Naive thymus-derived CD4-positive, alpha-beta T cell (primary cell): ENCODE measurements at regions of chr11 and their contacts with region 1.

Region 1: DNA sequence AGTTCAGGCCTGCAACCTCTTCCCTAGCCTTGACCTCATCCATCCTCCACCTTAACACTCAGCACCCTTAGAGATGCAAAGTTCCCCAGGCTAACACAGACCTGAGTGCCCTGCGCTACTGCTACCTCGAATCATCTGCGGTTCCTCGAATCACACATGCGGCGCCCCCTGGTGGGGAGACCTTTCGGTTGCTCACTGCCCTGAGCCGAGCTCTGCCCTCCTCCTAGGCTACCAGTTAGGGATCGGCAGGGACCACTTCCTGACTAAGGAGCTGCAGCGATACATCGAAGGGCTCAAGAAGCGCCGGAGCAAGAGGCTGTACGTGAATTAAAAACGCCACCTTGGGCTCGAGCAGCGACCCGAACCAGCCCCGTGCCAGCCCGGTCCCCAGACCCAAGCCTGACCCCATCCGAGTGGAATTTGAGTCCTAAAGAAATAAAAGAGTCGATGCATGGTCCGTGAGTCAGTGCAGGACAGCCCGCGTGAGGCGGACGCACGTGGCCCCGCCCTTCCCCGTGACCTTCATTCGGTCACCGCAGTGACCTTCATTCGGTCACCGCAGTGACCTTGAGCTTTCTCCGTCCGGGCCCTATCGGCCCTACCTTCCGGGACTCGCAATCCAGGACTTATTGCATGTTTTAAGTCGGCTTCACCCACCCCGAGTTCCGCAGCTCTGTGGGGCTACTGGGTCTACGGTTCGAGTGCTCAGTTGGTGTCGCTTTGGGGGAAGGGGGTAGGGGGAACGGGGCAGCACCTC is 830 bp upstream of the ESRRA start:
- DNase-seq: peak; percentile 79 to 95 (median 90)
- ATAC-seq: peak; percentile 40
- H3K4me3 ChIP-seq: peak overlapping the region; percentile 97
- H3K4me3 Mint-ChIP-seq: peak overlapping the region; percentile 89 to 98 (median 94)
- H3K27ac ChIP-seq: peak overlapping the region; percentile 91
- H3K27ac Mint-ChIP-seq: peak overlapping the region; percentile 81 to 98 (median 95)
- H3K4me1 ChIP-seq: peaks cover 28 to 32% of the 10 kb centered on the region in 2 donors
- H3K4me1 Mint-ChIP-seq: peaks cover 25 to 43% (median 34%) of the 10 kb centered on the region in 7 donors
- H3K27me3 ChIP-seq: peaks cover 0 to 13% of the 10 kb centered on the region in 2 donors
- H3K27me3 Mint-ChIP-seq: peaks cover 13 to 29% (median 16%) of the 10 kb centered on the region in 5 donors

Region 2: GRCh38 chr11:64000026-64000739 is 304.3 kb before region 1 on chr11:
- CTCF ChIA-PET with region 1: interaction called, 6 read pairs
- POLR2A ChIA-PET with region 1: no interaction called
- intact Hi-C with region 1: loop called (anchors 1 to 5 kb)
- DNase-seq: peak; percentile 59 to 82 (median 75)
- ATAC-seq: peak; percentile 88
- H3K4me3 ChIP-seq: peak overlapping the region; percentile 41
- H3K4me3 Mint-ChIP-seq: peak overlapping the region in 7 of 10 donors; percentile 14 to 76 (median 45)
- H3K27ac ChIP-seq: peak overlapping the region; percentile 16
- H3K27ac Mint-ChIP-seq: no peak overlapping the region
- H3K4me1 ChIP-seq: peaks cover 8 to 15% of the 10 kb centered on the region in 2 donors
- H3K4me1 Mint-ChIP-seq: peaks cover 0 to 16% (median 9%) of the 10 kb centered on the region in 7 donors
- H3K27me3 ChIP-seq: no peaks in the 10 kb centered on the region
- H3K27me3 Mint-ChIP-seq: peaks cover 0 to 3% (median 0%) of the 10 kb centered on the region in 5 donors

Region 3: GRCh38 chr11:64225612-64226506 is 78.6 kb before region 1 on chr11 and contains the starts of genes NUDT22 and TRPT1:
- CTCF ChIA-PET with region 1: interaction called, 6 read pairs
- POLR2A ChIA-PET with region 1: interaction called, 7 read pairs
- intact Hi-C with region 1: loop called (anchors 1 kb)
- DNase-seq: peak; percentile 81 to 97 (median 86)
- ATAC-seq: peak; percentile 82
- H3K4me3 ChIP-seq: peak within 1 kb of the TSS; percentile 60
- H3K4me3 Mint-ChIP-seq: peak within 1 kb of the TSS; percentile 87 to 96 (median 92)
- H3K27ac ChIP-seq: peak within 1 kb of the TSS; percentile 89
- H3K27ac Mint-ChIP-seq: peak within 1 kb of the TSS; percentile 76 to 97 (median 90)
- H3K4me1 ChIP-seq: peaks cover 28 to 34% of the 10 kb centered on the region in 2 donors
- H3K4me1 Mint-ChIP-seq: peaks cover 15 to 46% (median 34%) of the 10 kb centered on the region in 7 donors
- H3K27me3 ChIP-seq: no peaks in the 10 kb centered on the region
- H3K27me3 Mint-ChIP-seq: no peaks in the 10 kb centered on the region
- total RNA-seq, gene NUDT22: 47.8 to 94.0 (median 78.3) TPM
- total RNA-seq, gene TRPT1: 24.0 to 53.0 (median 27.2) TPM

Region 4: GRCh38 chr11:64269380-64270234 is 34.9 kb before region 1 on chr11:
- CTCF ChIA-PET with region 1: interaction called, 8 read pairs
- POLR2A ChIA-PET with region 1: interaction called, 57 read pairs
- intact Hi-C with region 1: loop called (anchors 1 kb)
- DNase-seq: peak; percentile 89 to 98 (median 98)
- ATAC-seq: peak; percentile 82
- H3K4me3 ChIP-seq: peak overlapping the region; percentile 91
- H3K4me3 Mint-ChIP-seq: peak overlapping the region; percentile 95 to 100 (median 98)
- H3K27ac ChIP-seq: peak overlapping the region; percentile 95
- H3K27ac Mint-ChIP-seq: peak overlapping the region; percentile 94 to 99 (median 99)
- H3K4me1 ChIP-seq: peaks cover 8 to 10% of the 10 kb centered on the region in 2 donors
- H3K4me1 Mint-ChIP-seq: peaks cover 8 to 29% (median 24%) of the 10 kb centered on the region in 7 donors
- H3K27me3 ChIP-seq: no peaks in the 10 kb centered on the region
- H3K27me3 Mint-ChIP-seq: no peaks in the 10 kb centered on the region

Region 5: GRCh38 chr11:64341851-64342791 is 37.6 kb after region 1 on chr11:
- CTCF ChIA-PET with region 1: interaction called, 3 read pairs
- POLR2A ChIA-PET with region 1: interaction called, 3 read pairs
- intact Hi-C with region 1: loop called (anchors 1 kb)
- DNase-seq: peak; percentile 82 to 96 (median 88)
- ATAC-seq: peak; percentile 80
- H3K4me3 ChIP-seq: no peak overlapping the region
- H3K4me3 Mint-ChIP-seq: peak overlapping the region in 9 of 10 donors; percentile 9 to 91 (median 76)
- H3K27ac ChIP-seq: peak overlapping the region; percentile 40
- H3K27ac Mint-ChIP-seq: peak overlapping the region in 3 of 9 donors; percentile 25 to 75 (median 42)
- H3K4me1 ChIP-seq: peaks cover 29 to 30% of the 10 kb centered on the region in 2 donors
- H3K4me1 Mint-ChIP-seq: peaks cover 23 to 49% (median 30%) of the 10 kb centered on the region in 7 donors
- H3K27me3 ChIP-seq: no peaks in the 10 kb centered on the region
- H3K27me3 Mint-ChIP-seq: peaks cover 0 to 2% (median 0%) of the 10 kb centered on the region in 5 donors